AG04449 (cell line): ENCODE measurements at regions of chr20 and their contacts with region 1.

Region 1: DNA sequence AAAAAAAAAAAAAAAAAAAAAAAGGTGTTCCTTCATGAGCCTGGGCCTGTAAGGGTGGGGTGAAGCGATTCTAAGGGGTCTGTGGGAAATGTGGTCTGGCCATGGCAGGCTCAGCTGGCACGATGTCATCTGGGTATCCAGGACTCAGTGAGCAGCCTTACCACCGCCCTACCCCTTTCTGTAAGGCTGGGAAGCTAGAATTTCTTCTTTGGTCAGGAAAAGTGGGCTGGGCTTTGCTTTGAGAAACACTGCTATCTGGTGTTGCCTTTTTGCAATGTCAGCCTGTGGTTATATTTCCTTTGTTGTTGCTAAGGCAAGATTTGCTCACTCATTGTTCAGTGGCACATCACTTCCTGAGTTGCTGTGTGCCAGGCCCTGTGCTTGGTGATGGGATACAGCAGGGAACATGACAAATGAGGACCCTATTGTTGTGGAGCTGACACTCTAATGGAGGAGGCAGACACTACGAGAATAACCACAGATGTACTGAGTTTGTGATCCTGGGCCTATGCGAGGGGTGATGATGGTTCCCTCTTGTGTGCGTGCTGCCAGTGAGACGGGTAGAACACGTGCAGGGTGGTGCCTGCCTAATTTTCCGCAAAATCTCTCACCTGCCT is 45.9 kb upstream of the ZNFX1 start:
- DNase-seq: no peak
- H3K4me3 ChIP-seq: no peak overlapping the region
- CTCF ChIP-seq: peak; percentile 44

Region 2: DNA sequence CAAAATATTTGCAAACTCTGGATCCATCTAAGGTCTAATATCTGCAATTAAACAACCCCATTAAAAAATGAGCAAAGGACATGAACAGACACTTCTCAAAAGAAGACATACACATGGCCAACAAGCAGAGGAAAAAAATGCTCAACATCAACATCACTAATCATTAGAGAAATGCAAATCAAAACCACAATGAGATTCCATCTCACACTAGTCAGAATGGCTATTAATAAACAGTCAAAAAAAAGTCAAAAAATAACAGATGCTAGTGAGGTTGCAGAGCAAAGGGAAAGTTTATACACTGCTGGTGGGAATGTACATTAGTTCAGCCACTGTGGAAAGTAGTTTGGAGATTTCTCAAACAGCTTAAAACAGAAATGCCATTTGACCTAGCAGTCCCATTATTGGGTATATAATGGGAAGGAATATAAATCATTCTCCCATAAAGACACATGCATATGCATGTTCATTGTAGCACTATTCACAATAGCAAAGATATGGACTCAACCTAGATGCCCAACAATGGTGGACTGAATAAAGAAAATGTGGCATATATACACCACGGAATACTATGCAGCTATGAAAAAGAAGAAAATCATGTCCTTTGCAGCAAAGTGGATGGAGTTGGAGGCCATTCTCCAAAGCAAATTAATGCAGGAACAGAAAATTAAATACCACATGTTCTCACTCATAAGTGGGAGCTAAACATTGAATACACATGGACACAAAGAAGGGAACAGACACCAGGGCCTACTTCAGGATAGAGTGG is 54.9 kb before region 1 on chr20:
- CTCF ChIA-PET with region 1: interaction called, 16 read pairs
- POLR2A ChIA-PET with region 1: no interaction called
- DNase-seq: no peak
- H3K4me3 ChIP-seq: no peak overlapping the region
- CTCF ChIP-seq: no peak

Region 3: GRCh38 chr20:49303065-49303552 is 20.6 kb before region 1 on chr20:
- CTCF ChIA-PET with region 1: interaction called, 10 read pairs
- POLR2A ChIA-PET with region 1: no interaction called
- DNase-seq: no peak
- H3K4me3 ChIP-seq: no peak overlapping the region
- CTCF ChIP-seq: no peak

Region 4: GRCh38 chr20:49338061-49338460 is 14.3 kb after region 1 on chr20:
- CTCF ChIA-PET with region 1: interaction called, 59 read pairs
- POLR2A ChIA-PET with region 1: no interaction called
- DNase-seq: no peak
- H3K4me3 ChIP-seq: no peak overlapping the region
- CTCF ChIP-seq: no peak

Region 5: GRCh38 chr20:49372095-49372726 is 48.5 kb after region 1 on chr20:
- CTCF ChIA-PET with region 1: no interaction called
- POLR2A ChIA-PET with region 1: no interaction called
- DNase-seq: no peak
- H3K4me3 ChIP-seq: no peak overlapping the region
- CTCF ChIP-seq: no peak

Region 6: DNA sequence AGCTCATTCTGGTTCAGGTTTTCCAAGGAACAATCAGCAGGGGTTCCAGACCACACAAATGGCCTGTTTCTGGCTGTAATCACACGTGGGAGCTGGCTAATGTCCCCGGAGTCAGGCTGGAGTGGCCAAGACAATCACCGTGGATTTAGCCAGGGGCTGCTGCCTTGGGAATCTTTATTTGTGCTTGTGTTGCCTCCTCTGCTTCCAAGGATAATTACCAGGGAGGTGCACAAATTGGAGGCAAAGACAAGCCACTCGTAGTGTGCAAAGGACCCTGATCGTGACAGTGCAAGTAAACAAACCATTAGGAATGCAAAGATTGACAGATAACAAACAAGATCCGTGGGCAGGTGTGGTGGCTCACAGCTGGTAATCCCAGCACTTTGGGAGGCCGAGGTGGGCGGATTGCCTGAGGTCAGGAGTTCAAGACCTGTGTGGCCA is 81.4 kb after region 1 on chr20:
- CTCF ChIA-PET with region 1: no interaction called
- POLR2A ChIA-PET with region 1: no interaction called
- DNase-seq: no peak
- H3K4me3 ChIP-seq: no peak overlapping the region
- CTCF ChIP-seq: no peak

Region 7: GRCh38 chr20:49508435-49509199 is 184.9 kb after region 1 on chr20:
- CTCF ChIA-PET with region 1: interaction called, 313 read pairs
- POLR2A ChIA-PET with region 1: no interaction called
- DNase-seq: no peak
- H3K4me3 ChIP-seq: no peak overlapping the region
- CTCF ChIP-seq: peak; percentile 55